ENCODE measurements at regions of chrX and their contacts with region 1.

Region 1: DNA sequence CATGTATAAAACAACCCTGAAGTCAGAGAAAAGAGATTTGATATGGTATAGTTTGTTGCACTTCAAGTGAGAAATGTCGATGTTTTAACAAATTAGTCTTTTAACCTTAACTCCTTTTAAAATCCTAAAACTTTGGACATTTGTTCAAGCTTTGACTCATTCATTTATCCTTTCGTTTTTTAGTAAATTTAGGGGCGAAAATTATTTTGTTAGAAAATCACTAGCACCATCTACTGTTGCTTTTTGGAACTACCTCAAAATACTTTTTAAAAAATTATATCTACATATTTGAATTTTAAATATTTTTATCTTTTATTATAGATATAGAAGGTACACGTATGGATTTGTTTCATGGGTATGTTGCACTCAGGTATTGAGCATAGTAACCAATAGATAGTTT is 165.1 kb upstream of the POF1B start:
- DNase-seq: no peak
- H3K4me3 ChIP-seq: no peak overlapping the region
- H3K27ac ChIP-seq: no peak overlapping the region
- H3K4me1 ChIP-seq: no peaks in the 10 kb centered on the region
- H3K27me3 ChIP-seq: no peaks in the 10 kb centered on the region
- CTCF ChIP-seq: peak; percentile 63

Region 2: DNA sequence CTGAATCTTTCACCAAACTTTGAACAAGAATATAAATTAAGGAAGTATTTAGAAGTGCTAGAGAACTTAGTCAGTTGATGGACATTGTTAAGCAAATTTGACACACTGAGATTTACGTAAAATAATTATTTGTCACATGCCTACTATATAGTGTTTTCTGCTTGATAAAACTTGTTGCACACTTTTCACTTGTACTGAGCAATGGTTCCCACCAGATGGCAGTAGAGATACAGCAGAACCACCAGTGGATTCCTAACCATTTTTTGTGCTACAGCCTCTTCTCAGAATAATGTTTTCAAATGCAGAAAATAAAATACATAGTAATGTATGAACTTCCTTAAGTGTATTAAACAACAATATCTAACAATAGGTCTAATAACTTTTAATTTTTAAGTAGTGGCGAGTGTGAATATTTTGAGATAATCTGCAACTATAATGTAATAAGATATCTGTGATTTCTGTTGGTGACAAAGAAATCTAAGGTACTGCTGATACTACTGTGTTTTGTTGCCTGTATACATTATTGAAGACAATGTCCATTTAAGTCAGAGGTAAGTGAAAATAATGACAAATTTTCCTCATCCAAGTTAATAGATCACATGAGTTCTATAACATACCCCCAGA is 459.7 kb before region 1 on chrX:
- intact Hi-C with region 1: loop called (anchors 10 kb)
- DNase-seq: peak; percentile 23
- H3K4me3 ChIP-seq: no peak overlapping the region
- H3K27ac ChIP-seq: no peak overlapping the region
- H3K4me1 ChIP-seq: no peaks in the 10 kb centered on the region
- H3K27me3 ChIP-seq: no peaks in the 10 kb centered on the region
- CTCF ChIP-seq: peak; percentile 84

Region 3: DNA sequence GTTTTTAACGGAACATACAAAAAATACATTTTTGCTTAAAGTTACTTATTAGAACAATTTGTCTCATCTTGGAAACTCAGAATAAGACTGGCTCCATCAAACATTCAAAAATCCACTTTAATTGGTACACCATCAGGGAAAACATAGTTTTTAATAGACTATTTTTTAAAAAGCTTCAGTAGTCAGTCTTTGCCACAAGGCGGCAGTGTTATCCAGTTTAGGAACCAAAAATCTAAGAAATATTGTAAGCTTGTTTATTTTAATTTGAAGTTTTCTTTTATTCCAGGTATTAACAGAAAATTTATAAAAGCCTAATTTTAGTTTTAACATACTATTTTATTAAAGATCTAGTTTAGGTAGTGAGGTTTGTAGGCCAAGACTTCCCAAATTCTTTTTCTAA is 433.3 kb before region 1 on chrX:
- intact Hi-C with region 1: loop called (anchors 2 kb)
- DNase-seq: peak; percentile 26
- H3K4me3 ChIP-seq: no peak overlapping the region
- H3K27ac ChIP-seq: no peak overlapping the region
- H3K4me1 ChIP-seq: no peaks in the 10 kb centered on the region
- H3K27me3 ChIP-seq: no peaks in the 10 kb centered on the region
- CTCF ChIP-seq: peak; percentile 66

Region 4: DNA sequence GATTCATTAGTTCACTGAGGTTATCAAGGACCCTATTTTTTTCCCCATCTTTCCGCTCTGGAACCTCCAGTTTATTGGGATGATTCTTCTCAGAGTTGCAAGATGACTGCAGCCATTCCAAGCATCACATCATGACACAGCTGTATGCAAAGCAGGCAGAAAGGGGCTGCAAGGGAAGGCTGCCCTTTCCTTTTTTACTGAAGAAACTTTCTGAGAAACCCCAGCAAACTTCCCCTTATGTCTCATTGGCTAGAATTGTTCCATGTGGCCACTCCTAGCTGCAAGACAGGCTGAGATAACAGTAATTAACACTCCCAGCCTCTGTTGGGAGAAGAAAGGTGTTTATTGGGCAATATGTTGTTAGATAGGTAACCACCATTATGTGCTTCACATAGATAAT is 403.6 kb before region 1 on chrX:
- intact Hi-C with region 1: no loop called
- DNase-seq: no peak
- H3K4me3 ChIP-seq: no peak overlapping the region
- H3K27ac ChIP-seq: no peak overlapping the region
- H3K4me1 ChIP-seq: no peaks in the 10 kb centered on the region
- H3K27me3 ChIP-seq: no peaks in the 10 kb centered on the region
- CTCF ChIP-seq: no peak

Measured in colonic mucosa (tissue), 4 donors.